Ovary (tissue), 10 donors: ENCODE measurements at regions of chr13 and their contacts with region 1.

Region 1: GRCh38 chr13:30802953-30803478 is 67.7 kb downstream of the ALOX5AP start:
- DNase-seq: peak; percentile 84 to 91 (median 86)
- H3K4me3 ChIP-seq: peak overlapping the region; percentile 35
- H3K27ac ChIP-seq: no peak overlapping the region
- H3K4me1 ChIP-seq: peaks cover 4% of the 10 kb centered on the region
- H3K27me3 ChIP-seq: no peaks in the 10 kb centered on the region
- CTCF ChIP-seq: peak; percentile 84 to 92 (median 86)
- EP300 ChIP-seq: no peak
- POLR2A ChIP-seq: no peak

Region 2: GRCh38 chr13:30465585-30466357 is 337.2 kb before region 1 on chr13 and contains the start of gene HMGB1:
- intact Hi-C with region 1: loop called in 1 of 4 experiments (anchors 10 kb)
- DNase-seq: peak; percentile 97 to 98 (median 97)
- H3K4me3 ChIP-seq: peak within 1 kb of the TSS; percentile 93
- H3K27ac ChIP-seq: peak within 1 kb of the TSS; percentile 99 to 100
- H3K4me1 ChIP-seq: peaks cover 1% of the 10 kb centered on the region
- H3K27me3 ChIP-seq: no peaks in the 10 kb centered on the region
- CTCF ChIP-seq: no peak
- EP300 ChIP-seq: no peak
- POLR2A ChIP-seq: peak; percentile 98
- total RNA-seq, gene HMGB1: 163 to 283 (median 240) TPM

Region 3: GRCh38 chr13:30679483-30680330 is 123.3 kb before region 1 on chr13:
- intact Hi-C with region 1: loop called in 3 of 4 experiments (anchors 2 to 5 kb)
- DNase-seq: no peak
- H3K4me3 ChIP-seq: no peak overlapping the region
- H3K27ac ChIP-seq: no peak overlapping the region
- H3K4me1 ChIP-seq: no peaks in the 10 kb centered on the region
- H3K27me3 ChIP-seq: no peaks in the 10 kb centered on the region
- CTCF ChIP-seq: no peak
- EP300 ChIP-seq: no peak
- POLR2A ChIP-seq: no peak